OCI-LY7 (cell line): ENCODE measurements at regions of chr10 and their contacts with region 1.

Region 1: DNA sequence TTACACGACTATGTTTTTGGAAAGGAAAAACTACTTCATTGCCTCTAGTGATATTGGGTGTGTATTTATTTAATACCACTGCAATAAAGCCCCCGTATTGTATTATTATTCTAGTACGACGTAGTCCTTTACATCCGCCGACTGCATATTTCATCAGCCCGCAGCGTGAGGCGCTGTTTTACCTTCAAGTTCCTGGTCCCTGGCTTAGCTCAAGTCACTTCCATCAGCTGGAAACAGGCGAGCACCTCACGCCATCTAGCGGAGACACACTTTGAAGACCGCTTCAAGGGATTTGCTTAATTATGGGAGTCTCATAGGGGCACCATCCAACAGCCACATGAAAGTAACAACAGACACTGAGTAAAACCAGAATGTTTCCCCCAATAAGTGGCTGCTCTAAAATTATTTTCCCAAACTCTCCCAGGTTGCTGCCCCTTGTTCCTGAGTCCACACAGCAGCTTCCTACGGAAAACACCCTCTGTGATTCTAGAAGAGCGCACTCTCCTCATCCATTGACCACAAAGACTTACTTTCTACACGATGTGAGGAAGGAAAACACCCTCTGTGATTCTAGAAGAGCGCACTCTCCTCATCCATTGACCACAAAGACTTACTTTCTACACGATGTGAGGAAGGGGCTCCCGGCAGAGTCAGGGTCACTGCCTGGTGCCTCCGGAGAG is 15.7 kb upstream of the ITIH2 start:
- DNase-seq: peak; percentile 91
- H3K4me3 ChIP-seq: no peak overlapping the region
- H3K27ac ChIP-seq: no peak overlapping the region
- H3K4me1 ChIP-seq: no peaks in the 10 kb centered on the region
- CTCF ChIP-seq: peak; percentile 100

Region 2: DNA sequence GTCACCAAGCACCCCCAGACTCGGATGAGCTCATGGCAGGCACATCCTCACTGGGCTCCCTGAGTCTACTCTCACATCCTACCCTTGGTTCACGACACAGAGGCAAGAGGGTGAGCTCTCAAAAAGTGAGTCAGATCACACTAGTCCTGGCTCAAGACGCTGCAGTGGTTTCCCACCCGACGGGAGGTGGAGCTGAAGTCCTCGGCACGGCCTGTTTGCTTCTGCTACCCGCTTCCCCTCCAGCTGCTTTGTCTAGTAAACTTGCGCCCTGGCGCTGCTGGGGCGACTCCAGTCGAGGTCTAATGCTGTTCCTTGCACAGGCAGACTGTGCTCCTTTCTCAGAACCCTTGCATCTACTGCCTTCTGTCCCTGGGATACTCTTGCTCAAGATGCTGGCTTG is 263.1 kb before region 1 on chr10:
- CTCF ChIA-PET with region 1: no interaction called
- POLR2A ChIA-PET with region 1: interaction called, 4 read pairs
- intact Hi-C with region 1: loop called (anchors 5 kb)
- DNase-seq: peak; percentile 61
- H3K4me3 ChIP-seq: no peak overlapping the region
- H3K27ac ChIP-seq: no peak overlapping the region
- H3K4me1 ChIP-seq: peaks cover 3% of the 10 kb centered on the region
- CTCF ChIP-seq: peak; percentile 58

Region 3: GRCh38 chr10:7734821-7735220 is 47.5 kb after region 1 on chr10:
- CTCF ChIA-PET with region 1: no interaction called
- POLR2A ChIA-PET with region 1: no interaction called
- intact Hi-C with region 1: no loop called
- DNase-seq: no peak
- H3K4me3 ChIP-seq: no peak overlapping the region
- H3K27ac ChIP-seq: no peak overlapping the region
- H3K4me1 ChIP-seq: no peaks in the 10 kb centered on the region
- CTCF ChIP-seq: no peak